ENCODE measurements at regions of chr11 and their contacts with region 1.

Region 1: GRCh38 chr11:94656968-94657367 is 89.8 kb downstream of the PIWIL4 start:
- DNase-seq: peak in 1 of 2 experiments; percentile 25
- H3K4me3 ChIP-seq: no peak overlapping the region
- H3K27ac ChIP-seq: no peak overlapping the region
- H3K4me1 ChIP-seq: peaks cover 0 to 31% (median 15%) of the 10 kb centered on the region in 4 experiments; a peak in 6 of 7 replicates
- H3K27me3 ChIP-seq: no peaks in the 10 kb centered on the region
- CTCF ChIP-seq: no peak
- EP300 ChIP-seq: peak in 1 of 2 experiments; percentile 65; a peak in 1 of 3 replicates
- POLR2A ChIP-seq: peak; percentile 4 to 28; a peak in 1 of 3 replicates
- RAD21 ChIP-seq: no peak

Region 2: DNA sequence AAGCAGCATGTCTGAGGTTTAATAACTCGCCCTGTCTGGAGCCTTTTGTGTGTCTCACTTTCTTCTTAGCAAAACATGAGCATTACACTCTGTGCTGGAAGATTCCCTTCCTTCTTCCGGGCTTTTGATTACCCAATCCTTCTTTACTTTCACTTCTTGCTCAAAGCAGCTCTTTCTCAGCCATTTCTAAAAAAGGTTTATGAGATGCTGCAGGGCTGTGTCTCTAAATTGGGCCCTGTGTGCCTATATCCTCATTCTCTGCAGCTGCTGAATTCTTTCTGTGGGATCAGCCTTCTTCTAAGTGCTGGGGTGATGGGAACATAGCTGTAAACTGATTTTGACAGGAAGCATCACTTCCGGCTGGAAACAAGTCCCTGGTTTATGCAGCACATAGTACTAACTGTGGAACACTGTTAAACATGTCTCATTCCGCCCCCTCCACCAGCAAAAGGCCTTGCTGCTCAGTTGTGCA is 18.0 kb before region 1 on chr11:
- CTCF ChIA-PET with region 1: interaction called, 3 read pairs
- POLR2A ChIA-PET with region 1: interaction called, 44 read pairs
- DNase-seq: peak in 1 of 2 experiments; percentile 17
- H3K4me3 ChIP-seq: no peak overlapping the region
- H3K27ac ChIP-seq: no peak overlapping the region
- H3K4me1 ChIP-seq: no peaks in the 10 kb centered on the region; a peak in 1 of 7 replicates
- H3K27me3 ChIP-seq: no peaks in the 10 kb centered on the region
- CTCF ChIP-seq: no peak
- EP300 ChIP-seq: no peak
- POLR2A ChIP-seq: no peak
- RAD21 ChIP-seq: no peak

Region 3: GRCh38 chr11:94700623-94701022 is 43.7 kb after region 1 on chr11:
- CTCF ChIA-PET with region 1: no interaction called
- POLR2A ChIA-PET with region 1: interaction called, 12 read pairs
- DNase-seq: no peak
- H3K4me3 ChIP-seq: no peak overlapping the region
- H3K27ac ChIP-seq: no peak overlapping the region
- H3K4me1 ChIP-seq: no peaks in the 10 kb centered on the region
- H3K27me3 ChIP-seq: no peaks in the 10 kb centered on the region
- CTCF ChIP-seq: no peak
- EP300 ChIP-seq: no peak
- POLR2A ChIP-seq: no peak
- RAD21 ChIP-seq: no peak

Region 4: GRCh38 chr11:94731880-94732601 is 75.1 kb after region 1 on chr11:
- CTCF ChIA-PET with region 1: interaction called, 3 read pairs
- POLR2A ChIA-PET with region 1: interaction called, 14 read pairs
- DNase-seq: no peak
- H3K4me3 ChIP-seq: no peak overlapping the region
- H3K27ac ChIP-seq: no peak overlapping the region
- H3K4me1 ChIP-seq: peaks cover 5 to 20% (median 15%) of the 10 kb centered on the region in 4 experiments
- H3K27me3 ChIP-seq: peaks cover 0 to 5% (median under 1%) of the 10 kb centered on the region in 4 experiments; a peak in 2 of 7 replicates
- CTCF ChIP-seq: no peak
- EP300 ChIP-seq: no peak
- POLR2A ChIP-seq: no peak
- RAD21 ChIP-seq: no peak

Region 5: DNA sequence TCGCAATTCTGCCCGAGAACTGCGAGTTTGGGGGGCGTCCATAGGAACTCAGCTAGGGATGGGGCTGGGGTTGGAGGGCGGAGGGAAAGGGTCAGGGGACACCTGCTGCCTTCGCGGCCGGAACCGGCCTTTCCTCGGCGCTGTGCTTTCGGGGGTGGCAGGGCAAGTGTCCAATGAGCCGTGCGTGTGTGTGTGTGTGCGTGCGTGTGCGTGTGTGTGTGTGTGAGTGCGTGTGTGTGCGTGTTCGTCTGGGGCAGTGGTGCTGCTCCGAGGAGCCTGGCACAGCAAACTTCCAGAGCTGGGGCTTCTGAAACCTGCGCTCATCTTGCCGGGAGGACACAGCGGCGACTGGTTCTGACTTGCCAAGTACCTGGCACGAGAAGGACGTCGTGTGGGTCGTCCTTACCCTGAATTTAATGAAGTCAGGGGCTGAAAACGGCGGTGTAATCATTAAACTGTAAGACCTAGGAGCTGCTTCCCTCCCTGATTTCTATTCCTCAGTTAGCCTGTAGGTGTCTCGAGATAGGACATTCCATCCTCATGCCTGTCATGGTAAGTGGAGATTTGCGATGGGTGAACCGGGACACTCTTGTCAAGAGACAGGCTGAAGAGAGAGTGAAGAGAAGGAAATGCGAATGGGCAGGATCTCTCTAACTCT is 84.2 kb after region 1 on chr11:
- CTCF ChIA-PET with region 1: interaction called, 7 read pairs
- POLR2A ChIA-PET with region 1: interaction called, 18 read pairs
- DNase-seq: peak in 1 of 2 experiments; percentile 62
- H3K4me3 ChIP-seq: peak overlapping the region; percentile 61 to 69 (median 67)
- H3K27ac ChIP-seq: no peak overlapping the region
- H3K4me1 ChIP-seq: peaks cover 0 to 17% (median 7%) of the 10 kb centered on the region in 4 experiments; a peak in 6 of 7 replicates
- H3K27me3 ChIP-seq: peaks cover 0 to 31% (median 19%) of the 10 kb centered on the region in 4 experiments; a peak in 6 of 7 replicates
- CTCF ChIP-seq: peak in 2 of 3 experiments; percentile 38 to 66; a peak in 2 of 4 replicates
- EP300 ChIP-seq: no peak
- POLR2A ChIP-seq: no peak
- RAD21 ChIP-seq: peak; percentile 43 to 49